Activated CD4-positive, alpha-beta T cell treated with anti-CD3 and anti-CD28 coated beads for 36 hours (primary cell): ENCODE measurements at regions of chr22 and their contacts with region 1.

Region 1: GRCh38 chr22:41940832-41941765 is 5.9 kb downstream of the CENPM start:
- DNase-seq: peak; percentile 91
- ATAC-seq: peak; percentile 63
- H3K4me3 Mint-ChIP-seq: peak overlapping the region; percentile 78
- H3K27ac Mint-ChIP-seq: peak overlapping the region; percentile 99
- H3K4me1 Mint-ChIP-seq: peaks cover 70% of the 10 kb centered on the region
- H3K27me3 Mint-ChIP-seq: no peaks in the 10 kb centered on the region

Region 2: DNA sequence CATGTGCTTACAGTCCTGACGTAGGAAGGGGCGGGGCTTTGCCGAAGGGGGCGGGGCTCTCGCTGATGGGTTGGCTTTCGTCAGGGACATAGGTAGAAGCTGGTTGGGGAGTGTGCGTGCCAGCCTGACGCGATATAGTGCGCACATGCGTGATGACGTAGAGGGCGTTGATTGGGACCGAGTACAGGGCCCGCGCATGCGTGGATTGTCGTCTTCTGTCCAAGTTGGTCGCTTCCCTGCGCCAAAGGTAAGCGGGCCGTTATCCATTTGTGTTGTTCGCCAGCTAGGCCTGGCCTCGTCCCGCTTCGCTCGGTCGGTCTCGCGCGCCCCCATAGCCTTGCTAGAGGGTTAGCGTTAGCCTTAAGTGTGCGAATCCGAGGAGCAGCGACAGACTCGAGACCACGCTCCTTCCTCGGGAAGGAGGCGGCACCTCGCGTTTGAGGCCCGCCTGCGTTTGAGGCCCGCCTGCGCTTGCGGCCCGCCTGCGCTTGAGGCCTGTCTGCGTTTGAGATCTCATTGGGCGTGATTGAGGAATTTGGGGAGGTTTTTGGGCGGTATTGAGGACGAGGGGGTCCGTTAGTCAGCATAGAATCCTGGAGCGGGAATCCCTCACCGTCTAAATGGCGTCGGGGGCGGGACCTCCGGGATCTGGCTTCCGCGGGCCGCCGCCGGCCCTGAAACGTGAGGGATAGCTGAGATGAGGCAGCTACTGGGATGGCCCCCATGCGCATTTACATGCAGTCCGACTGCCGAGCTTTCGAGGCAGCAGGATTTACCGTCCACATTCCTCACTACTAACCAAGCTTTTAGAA is 319.8 kb before region 1 on chr22 and contains the start of gene XRCC6:
- CTCF ChIA-PET with region 1: no interaction called
- POLR2A ChIA-PET with region 1: no interaction called
- intact Hi-C with region 1: loop called in 1 of 2 experiments (anchors 1 kb)
- DNase-seq: peak; percentile 100
- ATAC-seq: peak; percentile 91
- H3K4me3 Mint-ChIP-seq: peak within 1 kb of the TSS; percentile 98
- H3K27ac Mint-ChIP-seq: peak within 1 kb of the TSS; percentile 99
- H3K4me1 Mint-ChIP-seq: peaks cover 48% of the 10 kb centered on the region
- H3K27me3 Mint-ChIP-seq: no peaks in the 10 kb centered on the region
- total RNA-seq, gene XRCC6: 427 to 469 TPM

Region 3: DNA sequence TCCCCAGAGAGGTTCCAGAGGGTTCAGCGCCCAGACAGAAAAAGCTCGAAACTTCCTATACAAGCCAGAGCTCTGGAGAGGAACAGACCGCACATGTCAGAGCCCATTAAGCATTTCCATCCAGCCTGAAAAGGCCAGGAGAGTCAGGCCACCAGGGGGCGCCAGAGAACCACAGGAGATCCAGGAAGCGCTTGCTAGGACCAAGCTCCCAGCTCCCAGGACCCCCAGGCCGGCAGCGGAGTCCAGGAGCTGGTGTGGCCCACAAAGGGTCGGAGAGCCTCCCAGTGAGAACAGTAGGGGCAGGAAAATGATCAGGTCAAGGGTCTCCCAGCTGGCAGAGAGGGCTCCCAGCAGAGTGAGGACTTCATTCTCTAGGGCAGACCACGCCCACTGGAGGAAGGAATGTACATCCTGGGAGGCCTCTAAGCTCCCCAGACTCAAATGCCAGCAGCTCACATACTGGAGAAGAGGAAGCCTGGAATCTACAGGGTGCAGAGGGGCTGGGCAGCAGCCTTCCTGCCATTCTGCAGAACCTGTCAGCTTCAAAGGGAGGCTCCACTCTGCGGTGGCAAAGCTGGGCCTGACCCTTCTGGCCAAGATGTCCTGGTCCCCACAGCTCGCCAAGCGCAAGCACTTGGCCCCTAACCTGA is 243.8 kb before region 1 on chr22:
- CTCF ChIA-PET with region 1: interaction called, 31 read pairs
- POLR2A ChIA-PET with region 1: interaction called, 8 read pairs
- intact Hi-C with region 1: loop called (anchors 1 kb)
- DNase-seq: peak; percentile 96
- ATAC-seq: peak; percentile 79
- H3K4me3 Mint-ChIP-seq: no peak overlapping the region
- H3K27ac Mint-ChIP-seq: peak overlapping the region; percentile 77
- H3K4me1 Mint-ChIP-seq: peaks cover 11% of the 10 kb centered on the region
- H3K27me3 Mint-ChIP-seq: no peaks in the 10 kb centered on the region

Region 4: GRCh38 chr22:41800348-41801146 is 140.6 kb before region 1 on chr22 and contains the start of gene CCDC134:
- CTCF ChIA-PET with region 1: interaction called, 7 read pairs
- POLR2A ChIA-PET with region 1: interaction called, 10 read pairs
- intact Hi-C with region 1: loop called in 1 of 2 experiments (anchors 1 kb)
- DNase-seq: peak; percentile 95
- ATAC-seq: peak; percentile 98
- H3K4me3 Mint-ChIP-seq: peak within 1 kb of the TSS; percentile 91
- H3K27ac Mint-ChIP-seq: peak within 1 kb of the TSS; percentile 96
- H3K4me1 Mint-ChIP-seq: peaks cover 38% of the 10 kb centered on the region
- H3K27me3 Mint-ChIP-seq: no peaks in the 10 kb centered on the region
- total RNA-seq, gene CCDC134: 14.7 to 15.2 TPM

Region 5: DNA sequence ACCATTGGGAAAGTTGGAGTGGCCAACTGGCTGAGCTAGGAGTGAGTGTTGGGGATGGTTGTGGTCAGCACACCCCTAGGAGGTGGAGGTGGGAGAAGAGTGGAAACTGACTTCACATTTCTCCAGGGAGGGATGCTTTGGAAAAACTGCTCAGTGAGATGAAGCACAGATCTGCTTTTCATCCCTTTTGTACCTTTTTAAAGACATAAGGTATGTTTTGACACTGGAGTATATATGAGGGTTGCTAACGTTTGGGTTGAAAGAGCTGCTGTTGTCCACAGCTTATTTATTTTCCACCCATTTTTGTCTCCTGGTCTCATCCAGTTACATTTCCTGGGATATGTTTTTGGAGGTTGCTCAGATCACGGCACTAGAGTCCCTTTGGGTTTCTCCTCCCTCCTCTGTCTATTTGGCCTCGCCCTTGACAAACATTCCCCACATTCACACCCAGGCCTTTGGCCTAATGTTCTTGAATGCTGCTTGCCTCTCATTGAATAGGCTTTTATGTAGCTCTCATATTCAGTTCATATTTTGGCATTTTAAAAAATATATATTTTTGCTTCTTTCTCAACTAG is 99.9 kb before region 1 on chr22:
- CTCF ChIA-PET with region 1: interaction called, 3 read pairs
- POLR2A ChIA-PET with region 1: interaction called, 13 read pairs
- intact Hi-C with region 1: loop called in 1 of 2 experiments (anchors 1 kb)
- DNase-seq: no peak
- ATAC-seq: no peak
- H3K4me3 Mint-ChIP-seq: no peak overlapping the region
- H3K27ac Mint-ChIP-seq: no peak overlapping the region
- H3K4me1 Mint-ChIP-seq: peaks cover 84% of the 10 kb centered on the region
- H3K27me3 Mint-ChIP-seq: no peaks in the 10 kb centered on the region

Region 6: GRCh38 chr22:41919357-41920224 is 21.5 kb before region 1 on chr22:
- CTCF ChIA-PET with region 1: interaction called, 4 read pairs
- POLR2A ChIA-PET with region 1: interaction called, 6 read pairs
- intact Hi-C with region 1: loop called in 1 of 2 experiments (anchors 1 kb)
- DNase-seq: peak; percentile 68
- ATAC-seq: peak; percentile 53
- H3K4me3 Mint-ChIP-seq: peak overlapping the region; percentile 47
- H3K27ac Mint-ChIP-seq: peak overlapping the region; percentile 19
- H3K4me1 Mint-ChIP-seq: peaks cover 15% of the 10 kb centered on the region
- H3K27me3 Mint-ChIP-seq: peaks cover 24% of the 10 kb centered on the region